ENCODE measurements at regions of chr12 and their contacts with region 1.

Region 1: DNA sequence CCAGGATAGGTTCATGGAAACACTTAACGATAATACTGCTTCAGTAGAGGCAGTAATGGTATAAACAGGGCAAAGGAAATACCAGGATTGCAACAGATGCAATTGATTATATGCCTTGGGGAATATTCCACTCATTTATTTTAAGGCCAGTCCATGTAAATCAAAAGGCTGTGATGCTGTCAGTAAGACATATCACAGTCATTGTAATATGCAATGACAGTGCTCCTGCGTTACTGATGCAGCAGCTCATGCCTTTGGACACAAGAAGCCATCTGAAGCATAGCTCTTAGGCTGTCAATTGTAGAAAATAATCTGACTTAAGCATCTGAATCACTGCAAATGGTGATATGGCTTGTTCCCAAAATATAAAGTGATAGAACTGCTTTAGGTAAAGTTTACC is 674.8 kb downstream of the TMTC2 start:
- DNase-seq: no peak
- H3K4me3 ChIP-seq: no peak overlapping the region
- H3K27ac ChIP-seq: no peak overlapping the region
- H3K4me1 ChIP-seq: no peaks in the 10 kb centered on the region
- H3K27me3 ChIP-seq: no peaks in the 10 kb centered on the region
- CTCF ChIP-seq: no peak
- POLR2A ChIP-seq: no peak

Region 2: DNA sequence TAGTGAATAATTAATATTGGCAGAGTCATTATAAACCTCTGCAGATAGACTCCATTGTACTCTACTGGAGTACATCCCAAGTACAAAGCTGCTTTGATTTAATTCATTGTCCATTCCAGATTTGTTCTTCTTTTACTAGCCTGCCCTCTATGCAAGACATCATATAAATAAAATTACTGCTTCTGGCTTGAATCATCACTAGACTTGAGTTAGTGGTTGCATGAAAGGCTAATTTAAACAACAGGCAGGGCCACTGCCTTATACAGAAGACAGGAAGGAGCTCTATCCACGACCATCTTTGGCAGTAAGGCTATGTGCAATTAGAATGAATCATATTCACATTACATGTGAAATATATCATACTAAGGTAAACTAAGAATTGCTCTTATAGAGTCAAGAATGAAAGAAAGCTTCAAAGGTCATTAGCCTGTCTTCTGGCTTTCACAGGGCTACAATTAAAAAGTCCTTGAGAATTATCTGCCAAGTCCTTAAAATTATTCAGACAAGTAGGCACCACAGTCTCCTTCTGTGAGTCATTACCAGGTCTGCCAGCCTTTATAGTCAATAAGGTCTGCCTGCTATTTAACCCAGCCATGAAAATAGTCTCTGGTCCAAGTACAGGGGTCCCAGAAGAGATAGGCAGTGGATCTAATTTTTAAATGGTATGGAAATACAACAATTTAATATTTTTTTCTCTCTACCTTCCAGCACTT is 42.9 kb before region 1 on chr12:
- intact Hi-C with region 1: loop called (anchors 2 kb)
- DNase-seq: no peak
- H3K4me3 ChIP-seq: no peak overlapping the region
- H3K27ac ChIP-seq: no peak overlapping the region
- H3K4me1 ChIP-seq: peaks cover 0 to 13% of the 10 kb centered on the region in 2 donors
- H3K27me3 ChIP-seq: no peaks in the 10 kb centered on the region
- CTCF ChIP-seq: no peak
- POLR2A ChIP-seq: no peak

Measured in thyroid gland (tissue), 4 donors.